ENCODE measurements at regions of chr11 and their contacts with region 1.

Region 1: DNA sequence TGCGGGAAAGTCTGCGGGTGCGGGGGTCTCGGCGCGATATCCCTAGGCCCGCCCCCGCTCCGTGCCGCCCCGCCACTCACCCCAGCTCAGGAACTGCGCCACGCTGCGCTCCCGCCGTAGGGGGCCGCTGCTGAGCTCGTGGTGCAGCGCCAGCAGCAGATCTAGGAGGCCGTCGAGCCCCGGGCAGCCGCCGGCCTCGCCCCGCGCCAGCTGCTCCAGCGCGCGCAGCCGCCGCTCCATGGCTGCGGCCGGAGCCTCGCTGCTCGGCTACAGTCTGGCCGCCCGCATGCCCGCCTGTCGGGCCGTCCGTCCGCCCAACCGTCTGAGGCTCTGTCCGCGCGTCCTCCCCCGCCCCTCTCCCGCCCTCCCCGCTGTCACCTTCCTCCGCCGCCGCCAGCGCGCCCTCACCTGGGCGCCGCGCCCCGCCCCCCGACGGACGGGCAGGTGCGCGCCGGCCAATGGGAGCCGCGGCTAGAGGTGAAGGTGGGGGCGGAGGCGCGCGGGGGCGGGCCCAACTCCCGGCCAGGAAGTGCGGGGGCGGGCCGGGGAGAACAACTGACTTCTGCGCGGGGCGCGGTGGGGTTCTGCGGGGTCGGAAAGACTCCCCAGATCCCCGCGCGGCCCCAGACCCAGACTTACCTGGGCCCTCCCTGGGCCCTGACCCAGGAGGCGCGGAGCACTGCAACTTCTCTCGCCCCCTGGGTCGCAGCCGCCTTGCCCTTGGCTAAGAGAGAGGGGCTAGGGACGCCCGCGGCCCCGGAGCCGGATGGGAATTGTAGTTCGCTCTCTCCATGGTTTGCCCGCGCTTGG is at the start of gene CDC42BPG:
- DNase-seq: peak in 1 of 2 donors; percentile 53
- H3K4me3 ChIP-seq: peak within 1 kb of the TSS; percentile 4 to 41
- H3K27ac ChIP-seq: no peak within 1 kb of the TSS
- H3K4me1 ChIP-seq: peaks cover 0 to 5% of the 10 kb centered on the region in 2 donors
- H3K27me3 ChIP-seq: no peaks in the 10 kb centered on the region
- CTCF ChIP-seq: peak; percentile 24 to 73 (median 58)
- POLR2A ChIP-seq: no peak
- total RNA-seq, gene CDC42BPG: under 0.01 to 2.7 (median 0.30) TPM

Region 2: GRCh38 chr11:64887757-64888405 is 43.3 kb after region 1 on chr11:
- intact Hi-C with region 1: loop called (anchors 2 kb)
- DNase-seq: peak; percentile 69 to 83
- H3K4me3 ChIP-seq: peak overlapping the region in 1 of 2 donors; percentile 21
- H3K27ac ChIP-seq: peak overlapping the region; percentile 60 to 62
- H3K4me1 ChIP-seq: peaks cover 0 to 5% of the 10 kb centered on the region in 2 donors
- H3K27me3 ChIP-seq: no peaks in the 10 kb centered on the region
- CTCF ChIP-seq: peak; percentile 94 to 98 (median 96)
- POLR2A ChIP-seq: peak in 1 of 2 donors; percentile 26

Region 3: DNA sequence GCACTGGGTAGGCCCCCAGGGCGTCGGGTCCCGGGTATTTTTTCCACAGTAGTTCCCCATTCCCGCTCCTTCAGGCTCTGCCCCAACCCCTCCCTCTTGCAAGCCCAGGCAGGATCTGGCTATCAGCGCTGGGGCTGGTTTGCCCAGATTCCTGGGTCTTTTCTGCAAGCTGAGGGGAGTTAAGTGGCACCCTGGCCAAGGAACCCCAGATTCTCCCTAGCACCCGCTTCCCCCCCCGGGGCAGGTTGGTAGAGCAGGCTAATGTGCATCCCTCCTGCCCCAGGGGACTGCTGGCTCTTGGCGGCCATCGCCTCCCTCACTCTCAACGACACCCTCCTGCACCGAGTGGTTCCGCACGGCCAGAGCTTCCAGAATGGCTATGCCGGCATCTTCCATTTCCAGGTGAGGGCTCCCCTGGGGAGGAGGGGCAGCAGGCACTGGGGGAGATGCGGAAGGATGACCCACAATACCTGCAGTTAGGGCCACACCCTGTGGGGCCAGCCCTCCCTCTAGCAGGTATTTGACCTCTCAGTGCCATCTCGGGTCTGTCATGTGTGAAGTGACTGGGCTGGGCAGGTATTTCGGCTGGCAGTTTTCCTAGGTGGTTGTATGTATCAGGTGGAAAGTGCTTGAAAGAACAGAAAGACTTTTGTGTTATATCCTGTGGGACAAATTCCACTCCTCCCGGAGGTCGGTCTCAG is 338.8 kb after region 1 on chr11:
- intact Hi-C with region 1: no loop called
- DNase-seq: no peak
- H3K4me3 ChIP-seq: no peak overlapping the region
- H3K27ac ChIP-seq: peak overlapping the region; percentile 82 to 91
- H3K4me1 ChIP-seq: peaks cover 0 to 11% of the 10 kb centered on the region in 2 donors
- H3K27me3 ChIP-seq: no peaks in the 10 kb centered on the region
- CTCF ChIP-seq: no peak
- POLR2A ChIP-seq: no peak